Caco-2 (cell line): ENCODE measurements at regions of chr6 and their contacts with region 1.

Region 1: GRCh38 chr6:34986845-34987246 is 97.8 kb downstream of the ANKS1A start:
- DNase-seq: peak; percentile 56 to 72
- H3K4me3 ChIP-seq: no peak overlapping the region
- H3K4me3 Mint-ChIP-seq: no peak overlapping the region
- H3K27ac Mint-ChIP-seq: no peak overlapping the region
- H3K4me1 ChIP-seq: 0 out of 2 replicates have a peak, but pooled peaks cover 5% of the 10 kb centered on the region
- H3K4me1 Mint-ChIP-seq: peaks cover 6% of the 10 kb centered on the region
- H3K27me3 ChIP-seq: no peaks in the 10 kb centered on the region
- H3K27me3 Mint-ChIP-seq: no peaks in the 10 kb centered on the region
- CTCF ChIP-seq: peak; percentile 72 to 81

Region 2: DNA sequence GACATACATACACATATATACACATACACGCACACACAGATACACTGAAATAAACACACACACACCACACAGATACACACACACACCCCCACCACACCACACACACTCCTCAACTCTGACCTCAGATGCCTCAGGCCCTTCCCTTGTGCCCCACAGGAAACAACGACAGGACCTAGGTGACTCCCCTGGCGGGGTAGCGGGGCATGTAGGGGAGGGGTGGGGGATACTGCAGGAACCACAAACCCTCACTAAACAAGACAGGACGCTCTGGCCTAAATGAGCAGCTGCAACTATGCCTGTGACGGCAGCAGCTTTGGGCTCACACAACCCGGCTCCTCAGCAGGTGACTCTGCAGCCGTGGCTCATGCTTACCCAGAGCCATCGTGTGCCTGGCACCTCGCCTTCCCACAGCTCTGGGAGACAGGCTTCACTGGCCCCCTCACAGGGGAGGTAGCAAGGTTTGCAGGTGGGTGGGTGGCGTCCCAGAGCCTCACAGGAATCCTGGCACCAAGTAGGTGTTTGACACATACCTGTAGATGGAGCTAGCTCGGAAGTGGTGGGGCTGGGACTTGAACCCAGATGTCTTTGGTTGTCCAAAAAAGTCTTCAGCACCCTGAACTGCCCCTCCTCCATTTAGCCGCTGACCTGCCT is 941.8 kb before region 1 on chr6:
- CTCF ChIA-PET with region 1: no interaction called
- POLR2A ChIA-PET with region 1: no interaction called
- intact Hi-C with region 1: no loop called
- DNase-seq: no peak
- H3K4me3 ChIP-seq: no peak overlapping the region
- H3K4me3 Mint-ChIP-seq: no peak overlapping the region
- H3K27ac Mint-ChIP-seq: no peak overlapping the region
- H3K4me1 ChIP-seq: no peaks in the 10 kb centered on the region
- H3K4me1 Mint-ChIP-seq: no peaks in the 10 kb centered on the region
- H3K27me3 ChIP-seq: no peaks in the 10 kb centered on the region; the same call in 1 of the 2 replicates
- H3K27me3 Mint-ChIP-seq: peaks cover 9% of the 10 kb centered on the region
- CTCF ChIP-seq: no peak

Region 3: DNA sequence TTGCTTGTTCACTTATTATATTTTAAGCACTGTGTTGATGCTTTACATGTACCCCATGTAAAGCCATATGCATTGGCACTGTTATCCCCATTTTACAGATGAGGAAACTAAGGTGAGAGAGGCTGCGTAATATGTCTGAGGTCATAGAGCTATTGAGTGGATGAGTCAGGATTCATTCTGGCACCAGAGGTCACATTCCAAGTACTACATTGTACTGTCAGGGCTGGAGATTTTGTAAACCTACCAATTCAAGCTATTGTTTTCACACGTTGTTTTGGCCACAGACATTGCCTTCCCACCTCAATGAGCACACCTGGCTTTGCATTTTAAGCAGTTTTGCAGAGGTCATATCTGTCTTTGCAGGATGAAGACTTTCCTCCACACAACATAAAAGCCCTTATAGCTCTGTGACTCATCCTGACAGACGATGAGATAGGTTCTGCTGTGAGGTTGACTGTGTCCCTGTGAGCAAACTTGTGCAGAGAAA is 64.6 kb before region 1 on chr6:
- CTCF ChIA-PET with region 1: no interaction called
- POLR2A ChIA-PET with region 1: no interaction called
- intact Hi-C with region 1: no loop called
- DNase-seq: no peak
- H3K4me3 ChIP-seq: no peak overlapping the region
- H3K4me3 Mint-ChIP-seq: no peak overlapping the region
- H3K27ac Mint-ChIP-seq: no peak overlapping the region
- H3K4me1 ChIP-seq: no peaks in the 10 kb centered on the region; the same call in 1 of the 2 replicates
- H3K4me1 Mint-ChIP-seq: peaks cover 6% of the 10 kb centered on the region
- H3K27me3 ChIP-seq: no peaks in the 10 kb centered on the region
- H3K27me3 Mint-ChIP-seq: no peaks in the 10 kb centered on the region
- CTCF ChIP-seq: no peak

Region 4: GRCh38 chr6:35017411-35018181 is 30.8 kb after region 1 on chr6:
- CTCF ChIA-PET with region 1: interaction called, 4 read pairs
- POLR2A ChIA-PET with region 1: no interaction called
- intact Hi-C with region 1: loop called (anchors 2 kb)
- DNase-seq: no peak
- H3K4me3 ChIP-seq: no peak overlapping the region
- H3K4me3 Mint-ChIP-seq: peak overlapping the region; percentile 63
- H3K27ac Mint-ChIP-seq: peak overlapping the region; percentile 91
- H3K4me1 ChIP-seq: peaks cover 71% of the 10 kb centered on the region
- H3K4me1 Mint-ChIP-seq: peaks cover 53% of the 10 kb centered on the region
- H3K27me3 ChIP-seq: no peaks in the 10 kb centered on the region
- H3K27me3 Mint-ChIP-seq: no peaks in the 10 kb centered on the region
- CTCF ChIP-seq: no peak

Region 5: GRCh38 chr6:35064757-35065440 is 78.1 kb after region 1 on chr6:
- CTCF ChIA-PET with region 1: interaction called, 8 read pairs
- POLR2A ChIA-PET with region 1: no interaction called
- intact Hi-C with region 1: loop called (anchors 1 kb)
- DNase-seq: no peak
- H3K4me3 ChIP-seq: no peak overlapping the region
- H3K4me3 Mint-ChIP-seq: no peak overlapping the region
- H3K27ac Mint-ChIP-seq: no peak overlapping the region
- H3K4me1 ChIP-seq: no peaks in the 10 kb centered on the region
- H3K4me1 Mint-ChIP-seq: no peaks in the 10 kb centered on the region
- H3K27me3 ChIP-seq: no peaks in the 10 kb centered on the region
- H3K27me3 Mint-ChIP-seq: no peaks in the 10 kb centered on the region
- CTCF ChIP-seq: peak in 1 of 2 experiments; percentile 5

Region 6: DNA sequence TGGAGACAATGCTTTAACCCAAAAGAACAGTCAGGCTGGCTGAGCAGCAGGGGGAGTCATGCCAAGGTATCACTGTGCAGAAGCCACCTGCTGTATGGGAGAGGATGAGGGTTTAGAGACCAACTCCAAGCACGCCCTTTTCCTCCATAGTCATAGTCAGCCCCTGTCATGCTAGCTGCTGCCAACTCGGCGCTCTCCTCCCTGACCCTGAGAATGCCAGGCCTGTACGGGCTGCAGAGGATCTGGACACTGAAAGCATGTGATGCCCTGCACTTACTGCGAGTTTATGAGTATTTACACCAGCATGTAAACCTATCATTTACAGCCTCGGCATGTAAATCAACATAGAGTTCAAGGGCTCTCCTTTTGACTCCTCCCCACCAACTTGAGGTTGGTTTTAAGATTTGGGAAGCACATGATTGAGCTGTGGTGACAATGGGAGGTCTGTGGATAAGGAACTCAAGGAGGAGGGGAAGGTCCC is 215.3 kb after region 1 on chr6:
- CTCF ChIA-PET with region 1: interaction called, 3 read pairs
- POLR2A ChIA-PET with region 1: no interaction called
- intact Hi-C with region 1: loop called (anchors 10 kb)
- DNase-seq: no peak
- H3K4me3 ChIP-seq: no peak overlapping the region
- H3K4me3 Mint-ChIP-seq: no peak overlapping the region
- H3K27ac Mint-ChIP-seq: no peak overlapping the region
- H3K4me1 ChIP-seq: peaks cover 7% of the 10 kb centered on the region; the same call in 1 of the 2 replicates
- H3K4me1 Mint-ChIP-seq: peaks cover 14% of the 10 kb centered on the region
- H3K27me3 ChIP-seq: no peaks in the 10 kb centered on the region
- H3K27me3 Mint-ChIP-seq: no peaks in the 10 kb centered on the region
- CTCF ChIP-seq: no peak